ENCODE measurements at regions of chr2 and their contacts with region 1.

Region 1: DNA sequence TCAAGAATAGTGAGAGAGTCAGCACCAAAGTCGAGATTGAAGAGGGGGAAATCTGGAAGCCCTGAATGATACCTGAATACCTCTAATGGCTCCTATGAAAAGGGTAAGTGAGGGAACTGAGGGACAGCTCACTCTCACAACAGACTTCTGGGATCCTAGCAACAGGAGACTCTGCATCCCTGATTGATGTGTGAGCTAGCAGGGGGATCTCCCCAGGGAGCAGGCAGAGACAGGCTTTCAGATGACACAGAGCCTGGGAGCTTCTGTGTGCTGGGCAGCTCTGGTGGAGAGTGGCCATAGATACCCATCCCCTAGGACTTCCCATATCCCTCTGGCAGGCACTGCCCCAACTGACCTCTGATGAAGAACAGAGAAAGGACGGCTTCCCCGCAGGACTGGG is 206.2 kb downstream of the EXOC6B start:
- DNase-seq: no peak
- ATAC-seq: no peak
- H3K4me3 ChIP-seq: no peak overlapping the region
- H3K4me3 Mint-ChIP-seq: no peak overlapping the region
- H3K27ac ChIP-seq: no peak overlapping the region
- H3K27ac Mint-ChIP-seq: no peak overlapping the region
- H3K4me1 ChIP-seq: no peaks in the 10 kb centered on the region
- H3K4me1 Mint-ChIP-seq: no peaks in the 10 kb centered on the region
- H3K27me3 ChIP-seq: no peaks in the 10 kb centered on the region
- H3K27me3 Mint-ChIP-seq: no peaks in the 10 kb centered on the region
- CTCF ChIP-seq: no peak

Region 2: GRCh38 chr2:72630767-72631166 is 11.1 kb after region 1 on chr2:
- CTCF ChIA-PET with region 1: no interaction called
- POLR2A ChIA-PET with region 1: interaction called, 15 read pairs
- intact Hi-C with region 1: no loop called
- DNase-seq: no peak
- ATAC-seq: no peak
- H3K4me3 ChIP-seq: no peak overlapping the region
- H3K4me3 Mint-ChIP-seq: no peak overlapping the region
- H3K27ac ChIP-seq: no peak overlapping the region
- H3K27ac Mint-ChIP-seq: no peak overlapping the region
- H3K4me1 ChIP-seq: no peaks in the 10 kb centered on the region
- H3K4me1 Mint-ChIP-seq: no peaks in the 10 kb centered on the region
- H3K27me3 ChIP-seq: no peaks in the 10 kb centered on the region
- H3K27me3 Mint-ChIP-seq: no peaks in the 10 kb centered on the region
- CTCF ChIP-seq: no peak

Measured in B cell (primary cell).